Activated B cell treated with CpG ODN at 0.5 μM for 24 hours (primary cell): ENCODE measurements at regions of chr21 and their contacts with region 1.

Region 1: GRCh38 chr21:37267269-37268184 is at the start of gene VPS26C:
- DNase-seq: peak; percentile 94
- ATAC-seq: peak; percentile 86
- H3K4me3 Mint-ChIP-seq: peak within 1 kb of the TSS; percentile 96
- H3K27ac Mint-ChIP-seq: peak within 1 kb of the TSS; percentile 97
- H3K4me1 Mint-ChIP-seq: peaks cover 29% of the 10 kb centered on the region
- H3K27me3 Mint-ChIP-seq: peaks cover 6% of the 10 kb centered on the region
- CTCF ChIP-seq: no peak
- total RNA-seq, gene VPS26C: 42.5 and 45.2 TPM in 2 replicates

Region 2: GRCh38 chr21:36069713-36070573 is 1197.6 kb before region 1 on chr21 and contains the start of gene CBR1:
- CTCF ChIA-PET with region 1: no interaction called
- POLR2A ChIA-PET with region 1: no interaction called
- intact Hi-C with region 1: loop called (anchors 5 kb)
- DNase-seq: peak; percentile 86
- ATAC-seq: peak; percentile 99
- H3K4me3 Mint-ChIP-seq: peak within 1 kb of the TSS; percentile 90
- H3K27ac Mint-ChIP-seq: peak within 1 kb of the TSS; percentile 87
- H3K4me1 Mint-ChIP-seq: peaks cover 31% of the 10 kb centered on the region
- H3K27me3 Mint-ChIP-seq: no peaks in the 10 kb centered on the region
- CTCF ChIP-seq: no peak
- total RNA-seq, gene CBR1: 17.5 and 20.3 TPM in 2 replicates

Region 3: DNA sequence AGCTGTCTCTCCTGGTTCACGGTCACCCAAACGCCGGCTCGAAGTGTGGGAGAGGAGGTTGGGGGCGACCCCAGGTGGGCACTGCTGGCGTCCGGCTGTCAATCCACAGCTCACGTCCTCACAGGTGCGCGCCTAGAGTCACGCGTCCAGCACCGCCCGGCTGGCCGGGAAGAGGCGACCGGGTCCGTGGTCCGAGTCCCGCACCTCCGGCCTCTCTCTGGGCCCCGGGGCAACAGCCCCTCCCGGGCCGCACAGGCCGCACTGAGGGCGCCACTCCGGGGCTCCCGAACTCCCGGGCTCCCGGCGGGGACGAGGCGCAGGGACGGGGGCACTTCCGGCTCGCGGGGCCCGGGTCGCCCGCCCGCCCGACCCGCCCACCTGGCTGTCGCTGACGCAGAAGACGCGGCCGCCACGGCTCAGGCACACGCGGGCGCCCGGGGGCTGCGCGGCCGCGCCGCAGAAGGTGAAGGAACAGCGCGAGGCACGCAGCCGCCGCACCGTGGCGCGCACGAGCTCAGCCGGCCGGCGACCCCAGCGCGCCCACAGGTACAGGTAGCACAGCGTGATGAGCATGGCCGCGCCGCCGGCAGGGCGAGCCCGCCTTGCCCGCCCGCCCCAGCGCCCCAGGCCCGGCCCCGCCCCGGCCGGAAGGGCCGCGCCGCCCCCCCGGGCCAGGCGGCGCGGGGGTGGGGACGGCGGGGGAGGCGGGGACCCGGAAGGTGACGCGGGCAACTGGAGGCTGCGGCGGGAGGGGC is 301.3 kb before region 1 on chr21 and contains the start of gene HLCS:
- CTCF ChIA-PET with region 1: no interaction called
- POLR2A ChIA-PET with region 1: no interaction called
- intact Hi-C with region 1: loop called (anchors 2 kb)
- DNase-seq: peak; percentile 77
- ATAC-seq: peak; percentile 92
- H3K4me3 Mint-ChIP-seq: peak within 1 kb of the TSS; percentile 85
- H3K27ac Mint-ChIP-seq: peak within 1 kb of the TSS; percentile 80
- H3K4me1 Mint-ChIP-seq: peaks cover 20% of the 10 kb centered on the region
- H3K27me3 Mint-ChIP-seq: no peaks in the 10 kb centered on the region
- CTCF ChIP-seq: no peak
- total RNA-seq, gene HLCS: 8.1 and 10.6 TPM in 2 replicates

Region 4: GRCh38 chr21:37208056-37208721 is 59.3 kb before region 1 on chr21:
- CTCF ChIA-PET with region 1: no interaction called
- POLR2A ChIA-PET with region 1: interaction called, 13 read pairs
- intact Hi-C with region 1: loop called (anchors 1 kb)
- DNase-seq: peak; percentile 47
- ATAC-seq: peak; percentile 65
- H3K4me3 Mint-ChIP-seq: peak overlapping the region; percentile 77
- H3K27ac Mint-ChIP-seq: peak overlapping the region; percentile 84
- H3K4me1 Mint-ChIP-seq: peaks cover 45% of the 10 kb centered on the region
- H3K27me3 Mint-ChIP-seq: no peaks in the 10 kb centered on the region
- CTCF ChIP-seq: no peak

Region 5: GRCh38 chr21:37220981-37221664 is 46.4 kb before region 1 on chr21:
- CTCF ChIA-PET with region 1: no interaction called
- POLR2A ChIA-PET with region 1: interaction called, 20 read pairs
- intact Hi-C with region 1: loop called (anchors 1 kb)
- DNase-seq: peak; percentile 90
- ATAC-seq: peak; percentile 87
- H3K4me3 Mint-ChIP-seq: peak overlapping the region; percentile 91
- H3K27ac Mint-ChIP-seq: peak overlapping the region; percentile 88
- H3K4me1 Mint-ChIP-seq: peaks cover 31% of the 10 kb centered on the region
- H3K27me3 Mint-ChIP-seq: no peaks in the 10 kb centered on the region
- CTCF ChIP-seq: no peak

Region 6: DNA sequence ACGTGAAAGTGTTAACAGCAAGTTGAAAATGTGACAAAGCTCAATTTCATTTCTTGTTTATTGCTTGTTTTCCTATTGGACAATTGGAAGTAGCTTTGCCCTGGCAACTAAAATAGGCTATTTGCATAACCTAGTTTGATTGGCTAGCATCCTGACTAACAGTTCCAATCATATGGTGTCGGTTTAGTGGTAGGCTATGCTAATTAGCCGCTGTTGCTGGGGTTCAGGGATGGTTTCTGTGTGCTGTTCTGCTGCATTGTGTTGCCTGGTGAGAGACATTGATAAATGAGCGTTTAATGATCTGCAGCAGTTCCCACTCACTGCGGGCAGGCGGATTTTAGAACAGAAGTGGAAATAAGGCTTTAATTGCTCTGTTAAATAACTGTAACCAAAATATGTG is 167.6 kb after region 1 on chr21:
- CTCF ChIA-PET with region 1: no interaction called
- POLR2A ChIA-PET with region 1: no interaction called
- intact Hi-C with region 1: loop called (anchors 5 kb)
- DNase-seq: no peak
- ATAC-seq: peak; percentile 95
- H3K4me3 Mint-ChIP-seq: no peak overlapping the region
- H3K27ac Mint-ChIP-seq: no peak overlapping the region
- H3K4me1 Mint-ChIP-seq: peaks cover 43% of the 10 kb centered on the region
- H3K27me3 Mint-ChIP-seq: no peaks in the 10 kb centered on the region
- CTCF ChIP-seq: no peak

Region 7: GRCh38 chr21:37463083-37463801 is 195.7 kb after region 1 on chr21:
- CTCF ChIA-PET with region 1: no interaction called
- POLR2A ChIA-PET with region 1: no interaction called
- intact Hi-C with region 1: loop called (anchors 2 kb)
- DNase-seq: no peak
- ATAC-seq: peak; percentile 76
- H3K4me3 Mint-ChIP-seq: peak overlapping the region; percentile 1
- H3K27ac Mint-ChIP-seq: peak overlapping the region; percentile 73
- H3K4me1 Mint-ChIP-seq: peaks cover 92% of the 10 kb centered on the region
- H3K27me3 Mint-ChIP-seq: no peaks in the 10 kb centered on the region
- CTCF ChIP-seq: no peak

Region 8: GRCh38 chr21:37503848-37504467 is 236.4 kb after region 1 on chr21:
- CTCF ChIA-PET with region 1: no interaction called
- POLR2A ChIA-PET with region 1: no interaction called
- intact Hi-C with region 1: no loop called
- DNase-seq: no peak
- ATAC-seq: no peak
- H3K4me3 Mint-ChIP-seq: no peak overlapping the region
- H3K27ac Mint-ChIP-seq: no peak overlapping the region
- H3K4me1 Mint-ChIP-seq: no peaks in the 10 kb centered on the region
- H3K27me3 Mint-ChIP-seq: no peaks in the 10 kb centered on the region
- CTCF ChIP-seq: no peak

Region 9: GRCh38 chr21:37787456-37787855 is 519.9 kb after region 1 on chr21:
- CTCF ChIA-PET with region 1: no interaction called
- POLR2A ChIA-PET with region 1: no interaction called
- intact Hi-C with region 1: no loop called
- DNase-seq: no peak
- ATAC-seq: no peak
- H3K4me3 Mint-ChIP-seq: no peak overlapping the region
- H3K27ac Mint-ChIP-seq: no peak overlapping the region
- H3K4me1 Mint-ChIP-seq: no peaks in the 10 kb centered on the region
- H3K27me3 Mint-ChIP-seq: no peaks in the 10 kb centered on the region
- CTCF ChIP-seq: no peak